GM12878 (cell line): ENCODE measurements at regions of chr20 and their contacts with region 1.

Region 1: DNA sequence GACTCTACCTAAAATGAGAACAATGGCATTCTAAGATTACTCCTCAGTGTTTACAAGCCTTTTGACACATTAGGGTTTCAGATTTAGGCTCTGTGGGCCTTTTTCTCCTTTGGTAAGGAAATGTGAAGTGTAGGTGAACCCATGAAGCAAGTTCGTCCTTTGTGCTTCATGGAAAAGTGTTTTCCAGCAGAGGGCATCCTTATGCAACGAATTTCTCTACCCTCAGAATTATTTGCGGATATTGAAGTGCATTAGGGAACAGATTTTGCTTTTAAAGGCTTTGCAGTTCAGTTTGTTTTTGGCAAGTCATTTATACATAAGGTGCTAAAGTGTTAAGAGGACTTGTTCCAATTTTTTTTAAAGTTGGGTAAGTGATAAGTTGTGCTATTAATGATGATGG is 55.7 kb upstream of the FERMT1 start:
- DNase-seq: no peak
- ATAC-seq: no peak
- H3K4me3 ChIP-seq: no peak overlapping the region
- H3K27ac ChIP-seq: no peak overlapping the region
- H3K4me1 ChIP-seq: no peaks in the 10 kb centered on the region
- H3K27me3 ChIP-seq: no peaks in the 10 kb centered on the region
- CTCF ChIP-seq: peak in 1 of 3 experiments; percentile 43; a peak in 1 of 6 replicates
- EP300 ChIP-seq: no peak
- POLR2A ChIP-seq: no peak
- RAD21 ChIP-seq: peak; percentile 36; the same call in 1 of the 2 replicates

Region 2: DNA sequence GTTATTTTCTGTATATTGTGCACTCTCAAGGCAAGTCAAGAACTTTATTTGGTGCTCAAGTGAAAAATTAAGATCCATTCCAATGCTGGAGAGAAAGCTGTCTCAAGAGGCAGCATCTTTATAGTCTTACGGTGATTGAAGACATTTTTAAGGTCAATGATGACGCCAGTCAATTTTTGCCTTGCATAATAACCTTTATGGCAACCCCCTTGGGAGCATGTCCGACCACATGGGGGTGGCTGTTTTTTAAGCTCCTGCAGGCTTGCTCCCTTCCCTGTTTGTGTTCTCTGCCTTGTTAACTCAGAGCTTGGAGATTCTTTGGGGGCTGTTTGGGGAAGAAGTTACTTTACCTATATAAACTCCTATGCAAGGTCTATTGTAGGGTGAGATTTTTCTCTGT is 53.9 kb after region 1 on chr20:
- CTCF ChIA-PET with region 1: no interaction called
- POLR2A ChIA-PET with region 1: no interaction called
- RAD21 ChIA-PET with region 1: no interaction called
- SMC1A ChIA-PET with region 1: no interaction called
- in situ Hi-C with region 1: no loop called
- intact Hi-C with region 1: no loop called
- DNase-seq: no peak
- ATAC-seq: no peak
- H3K4me3 ChIP-seq: no peak overlapping the region
- H3K27ac ChIP-seq: no peak overlapping the region
- H3K4me1 ChIP-seq: no peaks in the 10 kb centered on the region
- H3K27me3 ChIP-seq: no peaks in the 10 kb centered on the region
- CTCF ChIP-seq: no peak
- EP300 ChIP-seq: no peak
- POLR2A ChIP-seq: no peak
- RAD21 ChIP-seq: no peak

Region 3: DNA sequence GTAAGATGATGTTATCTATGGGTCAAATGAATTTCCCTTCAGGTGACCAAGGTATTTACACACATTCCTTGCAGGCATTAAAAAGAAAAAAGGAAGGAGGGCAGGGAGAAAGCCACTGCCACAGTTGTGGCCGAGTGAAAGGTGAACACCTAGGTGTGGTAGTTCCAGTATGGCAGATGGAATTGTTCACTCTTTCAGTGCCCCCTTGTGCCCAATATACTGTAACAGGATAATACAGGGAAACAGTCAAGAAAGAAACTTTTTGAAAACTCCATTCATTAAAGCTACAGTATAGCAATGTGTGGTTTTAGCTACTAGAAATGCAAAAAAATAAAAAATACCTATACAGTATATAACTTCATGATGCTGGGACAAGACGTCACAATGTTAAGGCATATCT is 641.1 kb after region 1 on chr20:
- CTCF ChIA-PET with region 1: no interaction called
- POLR2A ChIA-PET with region 1: interaction called, 5 read pairs
- RAD21 ChIA-PET with region 1: no interaction called
- SMC1A ChIA-PET with region 1: no interaction called
- in situ Hi-C with region 1: no loop called
- intact Hi-C with region 1: loop called (anchors 5 kb)
- DNase-seq: no peak
- ATAC-seq: peak; percentile 84
- H3K4me3 ChIP-seq: no peak overlapping the region
- H3K27ac ChIP-seq: no peak overlapping the region
- H3K4me1 ChIP-seq: no peaks in the 10 kb centered on the region
- H3K27me3 ChIP-seq: no peaks in the 10 kb centered on the region
- CTCF ChIP-seq: no peak; a peak in 1 of 6 replicates
- EP300 ChIP-seq: no peak
- POLR2A ChIP-seq: no peak
- RAD21 ChIP-seq: no peak